ENCODE measurements at regions of chr12 and their contacts with region 1.

Region 1: DNA sequence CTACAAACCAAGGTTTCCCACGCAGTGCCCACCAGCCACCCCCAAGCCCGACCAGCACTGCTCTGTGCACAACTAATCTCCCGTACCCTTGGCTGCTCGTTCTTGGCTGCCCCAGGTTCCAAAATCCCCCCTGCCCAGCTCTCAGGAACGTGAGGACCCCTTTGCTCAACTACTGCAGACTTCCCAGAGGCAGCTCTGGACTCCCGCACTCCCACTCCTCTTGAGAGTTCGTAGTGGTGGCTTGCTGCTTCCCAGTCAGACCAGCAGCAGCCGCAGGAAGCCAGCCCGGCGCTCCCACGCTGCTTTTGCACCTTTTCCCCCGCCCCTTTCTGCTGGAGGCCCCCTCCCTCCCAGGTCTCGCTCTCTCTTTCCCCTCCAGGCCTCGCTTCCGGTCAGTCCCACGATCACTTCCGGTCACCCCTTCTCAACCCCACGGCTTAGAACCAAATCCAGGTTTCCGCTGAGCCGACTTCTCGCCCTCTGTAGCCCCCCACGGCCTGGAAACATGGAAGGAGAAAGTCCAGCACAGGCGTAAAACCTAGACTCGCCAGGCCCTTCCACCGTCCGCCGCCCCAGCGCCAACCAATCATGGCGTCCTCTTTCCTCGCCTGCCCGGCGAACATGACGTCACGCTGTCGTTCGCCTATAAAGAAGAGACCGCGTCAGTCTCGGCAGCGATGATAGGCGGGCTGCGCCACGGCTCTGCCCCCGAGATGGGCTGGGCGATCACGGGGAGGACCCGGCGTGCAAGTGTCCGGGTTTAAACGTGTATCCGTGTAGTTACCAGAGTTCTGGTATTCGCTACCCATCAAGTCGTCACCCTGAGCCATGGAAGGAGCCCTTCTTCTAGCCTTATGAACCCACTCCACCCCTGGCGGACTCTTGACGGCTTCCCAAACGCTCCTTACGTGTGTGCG is at the start of gene TFCP2:
- DNase-seq: peak; percentile 97
- ATAC-seq: peak; percentile 93
- H3K4me3 ChIP-seq: peak within 1 kb of the TSS; percentile 79 to 98
- H3K27ac ChIP-seq: peak within 1 kb of the TSS; percentile 92
- H3K4me1 ChIP-seq: peaks cover 4 to 20% of the 10 kb centered on the region in 2 experiments; a peak in 3 of 4 replicates
- H3K27me3 ChIP-seq: no peaks in the 10 kb centered on the region
- CTCF ChIP-seq: no peak
- POLR2A ChIP-seq: peak; percentile 95
- RAD21 ChIP-seq: no peak
- total RNA-seq, gene TFCP2: 31.6 TPM

Region 2: GRCh38 chr12:51025836-51026638 is 146.7 kb before region 1 on chr12 and contains the start of gene SLC11A2:
- CTCF ChIA-PET with region 1: no interaction called
- POLR2A ChIA-PET with region 1: no interaction called
- RAD21 ChIA-PET with region 1: no interaction called
- intact Hi-C with region 1: no loop called
- DNase-seq: peak; percentile 86
- ATAC-seq: peak; percentile 93
- H3K4me3 ChIP-seq: peak within 1 kb of the TSS; percentile 76 to 77
- H3K27ac ChIP-seq: peak within 1 kb of the TSS; percentile 91
- H3K4me1 ChIP-seq: peaks cover 27 to 49% of the 10 kb centered on the region in 2 experiments
- H3K27me3 ChIP-seq: no peaks in the 10 kb centered on the region
- CTCF ChIP-seq: no peak
- POLR2A ChIP-seq: peak; percentile 90
- RAD21 ChIP-seq: no peak
- total RNA-seq, gene SLC11A2: 38.7 TPM

Region 3: GRCh38 chr12:51103977-51104376 is 68.8 kb before region 1 on chr12:
- CTCF ChIA-PET with region 1: no interaction called
- POLR2A ChIA-PET with region 1: no interaction called
- RAD21 ChIA-PET with region 1: no interaction called
- intact Hi-C with region 1: no loop called
- DNase-seq: no peak
- ATAC-seq: no peak
- H3K4me3 ChIP-seq: no peak overlapping the region
- H3K27ac ChIP-seq: no peak overlapping the region
- H3K4me1 ChIP-seq: no peaks in the 10 kb centered on the region
- H3K27me3 ChIP-seq: no peaks in the 10 kb centered on the region
- CTCF ChIP-seq: no peak
- POLR2A ChIP-seq: no peak
- RAD21 ChIP-seq: no peak

Region 4: GRCh38 chr12:51238510-51239334 is 65.9 kb after region 1 on chr12 and contains the start of gene DAZAP2:
- CTCF ChIA-PET with region 1: no interaction called
- POLR2A ChIA-PET with region 1: interaction called, 3 read pairs
- RAD21 ChIA-PET with region 1: no interaction called
- intact Hi-C with region 1: loop called (anchors 2 kb)
- DNase-seq: peak; percentile 90
- ATAC-seq: peak; percentile 94
- H3K4me3 ChIP-seq: peak within 1 kb of the TSS; percentile 96 to 99
- H3K27ac ChIP-seq: peak within 1 kb of the TSS; percentile 98
- H3K4me1 ChIP-seq: peaks cover 12 to 15% of the 10 kb centered on the region in 2 experiments
- H3K27me3 ChIP-seq: no peaks in the 10 kb centered on the region
- CTCF ChIP-seq: peak in 2 of 3 experiments; percentile 16 to 43; a peak in 2 of 6 replicates
- POLR2A ChIP-seq: peak; percentile 51
- RAD21 ChIP-seq: no peak
- total RNA-seq, gene DAZAP2: 157 TPM

Measured in HCT116 (cell line).